Activated T-helper 1 cell treated with anti-CD3 and anti-CD28 coated beads, Interleukin-12 subunit alpha, Interleukin-12 subunit beta, Interleukin-2, Interleukin-4 antibody, amounts not matched to agents 30 ng/mL and 10 ng/mL and 1 ng/mL, durations not matched to agents 14 hours and 24 hours and 36 hours (primary cell): ENCODE measurements at regions of chr6 and their contacts with region 1.

Region 1: GRCh38 chr6:158057213-158057987 is 75.7 kb downstream of the SYNJ2 start:
- DNase-seq: no peak
- H3K4me3 Mint-ChIP-seq: no peak overlapping the region
- H3K27ac Mint-ChIP-seq: peak overlapping the region; percentile 59
- H3K4me1 Mint-ChIP-seq: peaks cover 62% of the 10 kb centered on the region
- H3K27me3 Mint-ChIP-seq: no peaks in the 10 kb centered on the region

Region 2: GRCh38 chr6:158002951-158003853 is 54.2 kb before region 1 on chr6:
- intact Hi-C with region 1: loop called (anchors 2 kb)
- DNase-seq: no peak
- H3K4me3 Mint-ChIP-seq: peak overlapping the region; percentile 2
- H3K27ac Mint-ChIP-seq: peak overlapping the region; percentile 64
- H3K4me1 Mint-ChIP-seq: peaks cover 47% of the 10 kb centered on the region
- H3K27me3 Mint-ChIP-seq: no peaks in the 10 kb centered on the region

Region 3: GRCh38 chr6:158040051-158040803 is 17.2 kb before region 1 on chr6:
- intact Hi-C with region 1: loop called (anchors 1 kb)
- DNase-seq: peak; percentile 31
- H3K4me3 Mint-ChIP-seq: peak overlapping the region; percentile 66
- H3K27ac Mint-ChIP-seq: peak overlapping the region; percentile 88
- H3K4me1 Mint-ChIP-seq: peaks cover 40% of the 10 kb centered on the region
- H3K27me3 Mint-ChIP-seq: no peaks in the 10 kb centered on the region